Psoas muscle (tissue), 8 donors: ENCODE measurements at regions of chr21 and their contacts with region 1.

Region 1: GRCh38 chr21:33641336-33642026 is at the start of gene CRYZL1:
- DNase-seq: peak; percentile 100
- ATAC-seq: peak; percentile 88 to 89 (median 88)
- H3K4me3 ChIP-seq: peak within 1 kb of the TSS; percentile 87
- H3K27ac ChIP-seq: peak within 1 kb of the TSS; percentile 79
- H3K4me1 ChIP-seq: peaks cover 23% of the 10 kb centered on the region
- H3K27me3 ChIP-seq: no peaks in the 10 kb centered on the region
- CTCF ChIP-seq: no peak
- total RNA-seq, gene CRYZL1: 14.0 to 22.6 (median 18.8) TPM

Region 2: DNA sequence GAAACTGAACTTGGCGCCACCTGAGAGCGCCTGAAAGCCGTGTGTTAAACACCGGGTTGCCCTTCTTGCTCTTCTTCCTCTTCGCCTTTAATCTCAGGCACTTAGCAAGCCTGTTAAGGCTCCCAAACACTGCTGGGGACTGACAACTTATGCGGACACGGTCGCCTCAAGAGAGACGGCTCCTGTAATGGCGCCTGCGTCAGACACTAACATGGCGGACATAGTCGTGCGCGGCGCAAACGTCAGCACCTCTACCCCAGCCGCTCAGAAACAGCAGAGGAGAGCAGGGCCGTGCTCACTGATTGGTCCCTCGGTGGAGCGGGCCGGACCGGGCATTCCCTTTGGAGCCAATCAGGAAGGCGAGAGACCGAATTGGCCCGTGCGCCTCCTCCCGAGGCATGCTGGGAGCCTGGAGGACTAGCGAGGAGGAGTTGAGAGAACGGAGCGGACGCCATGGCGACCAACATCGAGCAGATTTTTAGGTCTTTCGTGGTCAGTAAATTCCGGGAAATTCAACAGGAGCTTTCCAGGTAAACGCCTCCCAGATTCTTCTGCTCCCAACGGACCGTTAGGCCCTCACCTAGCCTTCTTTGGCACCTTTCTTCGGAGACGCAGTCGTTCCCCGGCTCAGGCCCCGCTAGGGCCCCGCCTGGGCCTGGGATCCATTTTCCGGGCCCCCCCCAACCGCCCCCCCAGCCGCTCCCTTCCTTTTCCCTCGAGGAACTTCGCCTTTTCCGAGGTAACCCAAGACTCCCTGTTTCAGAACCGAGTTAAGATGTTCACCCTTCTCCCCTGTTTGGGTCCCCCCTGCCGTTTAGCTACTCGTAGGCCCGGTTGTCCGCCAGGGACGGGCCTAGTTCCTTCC is 98.6 kb before region 1 on chr21 and contains the start of gene SON:
- intact Hi-C with region 1: no loop called
- DNase-seq: peak; percentile 99 to 100
- ATAC-seq: peak; percentile 94 to 97 (median 96)
- H3K4me3 ChIP-seq: peak within 1 kb of the TSS; percentile 84
- H3K27ac ChIP-seq: peak within 1 kb of the TSS; percentile 99
- H3K4me1 ChIP-seq: peaks cover 31% of the 10 kb centered on the region
- H3K27me3 ChIP-seq: no peaks in the 10 kb centered on the region
- CTCF ChIP-seq: no peak
- total RNA-seq, gene SON: 126 to 179 (median 142) TPM

Region 3: GRCh38 chr21:33751120-33751519 is 109.6 kb after region 1 on chr21:
- intact Hi-C with region 1: loop called in 1 of 2 experiments (anchors 10 kb)
- DNase-seq: no peak
- ATAC-seq: peak in 3 of 4 donors; percentile 49 to 79 (median 67)
- H3K4me3 ChIP-seq: no peak overlapping the region
- H3K27ac ChIP-seq: no peak overlapping the region
- H3K4me1 ChIP-seq: peaks cover 23% of the 10 kb centered on the region
- H3K27me3 ChIP-seq: no peaks in the 10 kb centered on the region
- CTCF ChIP-seq: no peak

Region 4: GRCh38 chr21:33825915-33826314 is 184.4 kb after region 1 on chr21:
- intact Hi-C with region 1: loop called in 1 of 2 experiments (anchors 10 kb)
- DNase-seq: no peak
- ATAC-seq: no peak
- H3K4me3 ChIP-seq: no peak overlapping the region
- H3K27ac ChIP-seq: no peak overlapping the region
- H3K4me1 ChIP-seq: peaks cover 20% of the 10 kb centered on the region
- H3K27me3 ChIP-seq: no peaks in the 10 kb centered on the region
- CTCF ChIP-seq: no peak

Region 5: DNA sequence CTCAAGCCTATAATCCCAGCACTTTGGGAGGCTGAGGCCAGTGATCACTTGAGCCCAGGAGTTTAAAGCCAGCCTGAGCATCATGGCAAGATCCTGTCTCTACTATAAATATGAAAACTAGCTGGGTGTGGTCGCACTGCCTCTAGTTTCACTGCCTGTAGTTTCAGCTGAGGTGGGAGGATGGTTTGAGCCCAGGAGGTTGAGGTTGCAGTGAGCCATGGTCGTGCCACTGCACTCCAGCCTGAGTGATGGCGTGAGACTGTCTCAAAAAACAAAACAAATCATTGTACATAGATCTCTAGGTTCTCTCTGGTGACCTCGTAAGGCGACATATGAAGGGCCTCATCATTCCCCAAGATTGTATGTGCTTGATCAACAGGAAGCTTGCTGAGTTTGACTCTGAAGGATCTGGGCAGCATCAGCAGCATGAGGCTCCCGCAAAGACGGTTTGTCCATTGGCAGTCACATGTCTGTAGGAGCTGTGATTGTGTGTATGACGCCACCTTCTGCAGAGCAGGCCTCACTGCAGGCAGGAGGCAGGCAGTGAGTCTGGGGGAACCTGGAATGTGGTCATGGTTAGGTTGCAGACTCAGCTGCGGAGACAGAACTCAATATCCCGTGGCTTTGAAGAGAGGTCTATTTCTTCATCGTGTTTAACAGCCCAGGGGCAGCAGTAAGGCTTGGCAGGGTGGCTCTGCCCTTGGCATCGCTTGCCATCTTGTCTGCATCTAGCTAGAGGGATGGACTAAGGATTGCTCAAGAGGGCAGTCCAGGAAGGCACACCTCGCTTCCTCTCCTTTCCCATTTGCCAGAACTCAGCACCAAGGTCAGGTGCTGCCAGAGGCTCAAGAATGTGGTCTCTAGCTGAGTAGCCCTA is 260.2 kb after region 1 on chr21:
- intact Hi-C with region 1: loop called (anchors 5 to 10 kb)
- DNase-seq: peak in 1 of 2 donors; percentile 47
- ATAC-seq: peak; percentile 82 to 84 (median 84)
- H3K4me3 ChIP-seq: no peak overlapping the region
- H3K27ac ChIP-seq: peak overlapping the region; percentile 57
- H3K4me1 ChIP-seq: peaks cover 6% of the 10 kb centered on the region
- H3K27me3 ChIP-seq: no peaks in the 10 kb centered on the region
- CTCF ChIP-seq: peak; percentile 60